Left lung (tissue), 14 donors: ENCODE measurements at regions of chr19 and their contacts with region 1.

Region 1: GRCh38 chr19:34712395-34713261 is 21.4 kb upstream of the ZNF181 start:
- DNase-seq: peak in 2 of 4 donors; percentile 40 to 64
- ATAC-seq: peak; percentile 92
- H3K4me3 ChIP-seq: no peak overlapping the region
- H3K27ac ChIP-seq: no peak overlapping the region
- H3K4me1 ChIP-seq: no peaks in the 10 kb centered on the region
- H3K27me3 ChIP-seq: no peaks in the 10 kb centered on the region
- CTCF ChIP-seq: peak; percentile 71 to 76

Region 2: DNA sequence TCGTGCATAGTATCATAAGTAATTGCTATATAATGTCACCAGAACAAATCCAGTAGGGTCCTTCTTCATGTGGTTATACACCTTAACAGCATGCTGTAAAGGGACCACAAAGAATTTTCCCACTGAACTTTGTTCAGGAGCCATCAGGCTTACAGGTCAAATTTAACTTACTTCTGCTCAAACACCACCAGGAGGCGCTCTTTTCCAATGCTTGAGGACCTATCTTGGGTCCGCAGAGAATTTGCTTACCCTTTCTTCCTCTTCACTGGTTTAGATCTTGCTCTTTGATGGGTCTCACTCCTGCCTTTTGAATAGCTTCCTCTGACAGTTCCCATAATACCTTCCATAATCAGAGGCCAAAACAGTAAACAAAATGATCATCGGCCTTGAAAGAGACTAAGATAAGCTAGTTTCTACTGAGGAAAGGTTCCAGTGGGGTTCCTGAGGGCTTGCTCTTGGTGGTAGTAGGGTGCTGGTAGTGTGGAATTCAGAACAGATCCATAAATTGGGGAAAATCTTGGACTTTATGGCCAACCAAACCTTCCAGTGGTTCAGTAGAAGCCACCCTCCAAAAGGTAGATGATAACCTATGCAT is 73.0 kb before region 1 on chr19:
- intact Hi-C with region 1: loop called (anchors 2 to 10 kb)
- DNase-seq: peak in 3 of 4 donors; percentile 42 to 70 (median 47)
- ATAC-seq: peak; percentile 89
- H3K4me3 ChIP-seq: no peak overlapping the region
- H3K27ac ChIP-seq: no peak overlapping the region
- H3K4me1 ChIP-seq: no peaks in the 10 kb centered on the region
- H3K27me3 ChIP-seq: no peaks in the 10 kb centered on the region
- CTCF ChIP-seq: peak; percentile 75 to 82